Psoas muscle (tissue), 8 donors: ENCODE measurements at regions of chr2 and their contacts with region 1.

Region 1: DNA sequence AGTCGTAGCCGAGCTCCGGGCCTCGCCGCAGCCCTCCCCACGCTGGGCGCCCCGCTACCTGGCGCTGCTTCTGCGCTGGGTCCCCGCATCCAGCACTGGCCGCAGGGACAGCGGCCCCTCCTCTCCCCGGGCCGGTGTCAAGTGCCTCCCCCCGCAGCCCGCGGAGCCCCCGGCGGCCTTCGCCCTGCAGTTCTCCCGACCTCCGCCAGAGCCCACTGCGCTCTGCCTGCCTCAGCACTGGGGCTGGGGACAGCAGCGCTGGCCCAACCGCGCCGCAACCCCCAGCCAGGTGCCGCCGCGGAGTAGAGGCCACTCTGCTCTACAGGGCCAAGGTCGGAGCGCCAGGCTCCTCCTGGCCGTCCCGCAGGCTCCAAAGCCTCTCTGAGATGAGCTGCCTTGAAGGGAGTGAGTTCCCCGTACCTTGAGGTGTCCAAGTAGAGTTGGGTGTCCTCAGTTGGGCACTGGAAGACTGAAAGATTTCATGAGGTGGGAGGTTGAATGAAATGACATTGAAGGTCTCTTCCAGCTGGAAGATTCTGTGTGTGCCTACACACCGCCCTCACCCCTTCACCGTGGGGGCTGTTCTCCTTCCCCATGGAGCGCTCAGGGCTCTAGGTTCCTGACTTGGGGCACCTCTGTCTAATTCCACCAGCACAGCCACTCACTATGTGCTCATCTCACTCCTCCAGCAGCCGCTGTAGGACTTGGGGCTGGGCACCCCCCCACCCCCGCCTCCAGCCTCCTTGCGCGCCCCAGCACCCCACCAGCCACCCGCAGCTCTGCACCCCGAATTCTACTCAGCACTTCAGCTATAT is 854 bp upstream of the DNMT3A start:
- DNase-seq: peak; percentile 88 to 93
- ATAC-seq: peak; percentile 83 to 91 (median 88)
- H3K4me3 ChIP-seq: peak overlapping the region; percentile 79
- H3K27ac ChIP-seq: peak overlapping the region; percentile 81
- H3K4me1 ChIP-seq: peaks cover 27% of the 10 kb centered on the region
- H3K27me3 ChIP-seq: no peaks in the 10 kb centered on the region
- CTCF ChIP-seq: peak; percentile 98

Region 2: DNA sequence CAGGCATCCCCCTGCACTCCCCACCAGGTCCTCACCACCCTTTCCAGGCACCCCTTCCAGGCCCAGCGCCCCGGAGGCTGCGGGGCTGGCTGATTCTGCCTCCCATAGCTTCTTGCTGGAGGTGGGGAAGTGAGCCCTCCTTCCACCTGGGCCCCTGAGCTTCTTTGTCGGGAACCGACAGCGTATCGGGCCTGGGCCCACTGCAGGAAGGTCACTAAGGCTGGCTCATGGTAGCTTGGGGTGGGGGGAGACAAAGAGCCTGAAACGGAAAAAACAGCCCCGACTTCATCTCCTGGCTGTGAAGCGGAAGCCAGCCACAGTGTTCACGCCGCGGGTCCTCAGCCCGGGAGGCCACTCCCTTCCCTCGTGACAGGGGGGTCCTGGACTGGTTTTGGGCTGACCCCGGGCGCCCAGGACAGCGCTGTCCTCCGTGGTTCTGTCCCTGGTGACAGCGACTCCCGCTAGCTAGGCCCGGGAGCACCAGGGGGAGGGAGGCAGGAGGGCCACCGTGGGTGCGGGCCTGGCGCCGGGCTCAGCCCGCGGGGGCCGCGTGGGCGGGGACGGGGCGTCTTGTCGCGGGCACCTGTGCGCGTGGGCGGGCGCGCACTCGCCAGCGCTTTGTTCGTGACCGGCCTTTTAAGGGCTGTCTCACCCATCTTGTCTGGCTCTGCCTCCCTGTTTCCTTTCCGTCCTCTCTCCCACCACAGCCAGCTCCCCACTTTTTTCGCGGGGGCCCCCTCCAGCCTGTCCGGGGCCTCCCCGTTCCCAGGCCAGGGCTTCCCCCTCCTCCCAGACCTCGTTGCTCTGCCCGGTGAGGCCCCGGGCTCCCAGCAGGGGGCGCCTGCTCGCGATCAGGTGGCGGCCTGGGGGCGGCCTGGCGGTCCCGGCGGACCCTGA is 65.8 kb before region 1 on chr2:
- intact Hi-C with region 1: loop called in 1 of 2 experiments (anchors 2 kb)
- DNase-seq: peak; percentile 78 to 84
- ATAC-seq: peak; percentile 39 to 68 (median 62)
- H3K4me3 ChIP-seq: peak overlapping the region; percentile 53
- H3K27ac ChIP-seq: peak overlapping the region; percentile 81
- H3K4me1 ChIP-seq: peaks cover 24% of the 10 kb centered on the region
- H3K27me3 ChIP-seq: no peaks in the 10 kb centered on the region
- CTCF ChIP-seq: peak; percentile 71

Region 3: GRCh38 chr2:25301453-25302352 is 40.9 kb before region 1 on chr2:
- intact Hi-C with region 1: loop called (anchors 5 kb)
- DNase-seq: no peak
- ATAC-seq: peak; percentile 41 to 75 (median 63)
- H3K4me3 ChIP-seq: no peak overlapping the region
- H3K27ac ChIP-seq: peak overlapping the region; percentile 64
- H3K4me1 ChIP-seq: peaks cover 50% of the 10 kb centered on the region
- H3K27me3 ChIP-seq: no peaks in the 10 kb centered on the region
- CTCF ChIP-seq: no peak

Region 4: DNA sequence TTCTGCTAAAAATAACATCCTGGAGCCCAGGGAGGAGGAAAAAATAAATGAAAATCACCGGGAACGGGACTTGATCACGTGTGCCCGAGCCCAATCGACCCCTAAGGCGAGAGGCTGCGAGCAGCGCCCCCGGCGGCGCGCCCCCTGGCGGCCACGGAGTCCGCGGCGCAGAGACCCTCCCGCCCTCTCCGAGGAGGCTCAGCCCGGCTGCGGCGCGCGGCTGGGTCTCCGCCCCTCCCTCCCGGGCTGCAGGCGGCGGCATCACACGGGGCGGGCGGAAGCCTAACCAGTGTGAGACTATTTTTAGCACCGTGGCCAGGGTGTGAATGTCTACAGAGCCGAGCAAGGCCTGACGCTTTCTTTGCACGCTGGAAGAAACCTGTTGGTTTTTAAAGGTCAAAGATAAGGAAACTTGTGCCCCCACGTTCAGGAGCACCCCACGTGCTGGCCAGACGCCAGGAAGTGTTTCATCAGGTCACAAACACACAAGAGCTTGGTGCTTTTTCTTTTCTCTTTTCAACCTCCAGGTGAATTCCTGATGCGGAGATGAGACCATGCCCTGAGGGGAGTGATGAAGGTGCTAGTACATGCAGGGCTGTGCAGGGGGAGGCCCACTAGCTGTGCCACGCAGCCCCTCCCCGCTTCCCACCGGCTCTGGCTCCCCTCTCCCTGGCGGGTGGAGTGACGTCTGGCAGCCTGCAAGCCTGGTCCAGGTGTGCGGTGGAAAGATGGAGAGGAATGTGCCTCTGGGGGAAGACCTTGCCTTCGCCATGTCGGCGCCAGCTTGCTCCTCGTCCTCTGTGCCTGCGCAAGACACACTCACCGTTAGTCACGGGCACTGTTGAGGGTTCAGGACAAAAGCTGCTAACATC is 34.4 kb after region 1 on chr2:
- intact Hi-C with region 1: loop called in 1 of 2 experiments (anchors 5 kb)
- DNase-seq: peak; percentile 86 to 94
- ATAC-seq: peak; percentile 88 to 94 (median 92)
- H3K4me3 ChIP-seq: peak overlapping the region; percentile 53
- H3K27ac ChIP-seq: peak overlapping the region; percentile 53
- H3K4me1 ChIP-seq: peaks cover 40% of the 10 kb centered on the region
- H3K27me3 ChIP-seq: no peaks in the 10 kb centered on the region
- CTCF ChIP-seq: peak; percentile 98

Region 5: DNA sequence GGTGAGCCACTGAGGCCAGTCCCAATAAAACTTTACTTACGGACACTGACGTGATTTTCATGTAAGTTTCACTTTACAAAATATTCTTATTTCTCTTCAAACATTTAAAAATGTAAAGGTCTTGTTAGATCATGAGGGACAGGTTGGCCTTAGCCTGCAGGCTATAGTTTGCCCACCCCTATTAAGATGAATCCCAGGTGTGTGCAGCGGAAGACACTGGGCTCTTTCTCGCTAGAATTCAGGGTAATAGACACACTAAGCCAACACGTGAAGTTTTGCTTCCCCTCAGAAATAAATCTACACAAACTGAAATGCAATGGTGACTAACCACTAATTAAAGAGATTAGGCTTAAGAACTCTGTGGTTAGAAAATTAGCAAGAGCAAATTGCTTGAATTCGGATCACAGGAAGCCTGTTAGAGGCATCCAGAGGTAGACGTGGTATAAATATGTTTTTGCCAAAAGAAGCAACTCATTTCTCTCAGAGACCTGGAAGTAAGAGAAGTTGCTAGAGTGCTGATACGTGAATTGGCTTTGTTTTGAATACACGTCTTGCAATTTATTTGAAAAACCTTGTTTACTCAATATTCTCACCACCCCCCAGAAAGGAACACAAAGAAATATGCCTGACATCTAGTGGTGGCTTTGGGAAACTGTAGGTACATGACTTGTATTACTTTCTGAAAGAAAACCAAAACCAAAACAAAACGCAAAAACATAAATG is 179.2 kb after region 1 on chr2:
- intact Hi-C with region 1: loop called (anchors 2 to 10 kb)
- DNase-seq: no peak
- ATAC-seq: peak; percentile 40 to 86 (median 60)
- H3K4me3 ChIP-seq: peak overlapping the region; percentile 44
- H3K27ac ChIP-seq: no peak overlapping the region
- H3K4me1 ChIP-seq: no peaks in the 10 kb centered on the region
- H3K27me3 ChIP-seq: no peaks in the 10 kb centered on the region
- CTCF ChIP-seq: peak; percentile 79